Activated B cell treated with CpG ODN at 0.5 μM for 24 hours (primary cell): ENCODE measurements at regions of chr12 and their contacts with region 1.

Region 1: DNA sequence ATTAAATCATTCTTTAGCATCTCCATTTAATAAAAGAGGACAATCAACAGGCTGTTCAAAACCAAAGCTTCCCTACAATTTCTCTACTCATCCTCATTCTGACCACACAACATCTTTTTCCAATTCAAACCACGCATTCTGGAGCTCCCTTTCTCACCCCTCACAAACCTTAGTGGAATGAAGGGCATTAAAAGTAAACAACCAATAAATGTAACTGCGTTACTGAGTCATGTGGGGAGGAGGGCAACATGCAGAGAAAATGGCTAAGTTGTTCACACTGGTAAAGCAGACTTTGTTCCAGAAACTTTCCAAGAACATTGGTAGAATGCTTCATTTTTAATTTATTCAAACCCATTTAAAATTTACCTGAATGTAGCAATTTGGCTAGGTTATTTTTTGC is 19.6 kb downstream of the SOX5 start:
- DNase-seq: no peak
- ATAC-seq: no peak
- H3K4me3 Mint-ChIP-seq: no peak overlapping the region
- H3K27ac Mint-ChIP-seq: no peak overlapping the region
- H3K4me1 Mint-ChIP-seq: peaks cover under 1% of the 10 kb centered on the region
- H3K27me3 Mint-ChIP-seq: no peaks in the 10 kb centered on the region
- CTCF ChIP-seq: no peak

Region 2: DNA sequence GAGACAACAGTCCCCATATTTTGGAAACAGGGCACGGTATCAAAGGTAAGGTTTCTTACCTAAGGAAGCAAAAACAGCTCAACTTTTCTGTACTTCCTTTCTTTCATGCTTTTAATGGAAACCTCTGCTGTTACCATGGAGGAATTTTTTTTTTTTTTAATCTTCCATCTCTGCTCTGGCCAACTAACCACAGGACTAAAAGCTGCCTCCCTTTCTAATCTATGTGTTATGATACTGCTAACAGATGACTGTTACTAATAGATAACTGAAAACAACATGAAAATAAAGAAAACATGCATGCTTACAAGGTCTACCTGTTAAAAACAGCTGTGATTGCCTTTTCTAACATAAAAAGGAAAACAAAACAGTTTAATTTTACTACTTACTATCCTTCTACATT is 148.8 kb before region 1 on chr12:
- CTCF ChIA-PET with region 1: no interaction called
- POLR2A ChIA-PET with region 1: no interaction called
- intact Hi-C with region 1: no loop called
- DNase-seq: no peak
- ATAC-seq: no peak
- H3K4me3 Mint-ChIP-seq: no peak overlapping the region
- H3K27ac Mint-ChIP-seq: no peak overlapping the region
- H3K4me1 Mint-ChIP-seq: no peaks in the 10 kb centered on the region
- H3K27me3 Mint-ChIP-seq: no peaks in the 10 kb centered on the region
- CTCF ChIP-seq: no peak

Region 3: GRCh38 chr12:23959826-23960225 is 29.9 kb after region 1 on chr12:
- CTCF ChIA-PET with region 1: no interaction called
- POLR2A ChIA-PET with region 1: no interaction called
- intact Hi-C with region 1: loop called (anchors 2 kb)
- DNase-seq: no peak
- ATAC-seq: no peak
- H3K4me3 Mint-ChIP-seq: no peak overlapping the region
- H3K27ac Mint-ChIP-seq: no peak overlapping the region
- H3K4me1 Mint-ChIP-seq: no peaks in the 10 kb centered on the region
- H3K27me3 Mint-ChIP-seq: no peaks in the 10 kb centered on the region
- CTCF ChIP-seq: no peak